HEK293 (cell line): ENCODE measurements at regions of chr9 and their contacts with region 1.

Region 1: GRCh38 chr9:73023025-73023541 is 70.2 kb upstream of the ALDH1A1 start:
- H3K4me3 ChIP-seq: no peak overlapping the region
- H3K27ac ChIP-seq: no peak overlapping the region
- H3K4me1 ChIP-seq: no peaks in the 10 kb centered on the region
- CTCF ChIP-seq: 0 out of 2 replicates have a peak, but pooled peaks have one; percentile 18

Region 2: GRCh38 chr9:72843520-72844439 is 179.3 kb before region 1 on chr9:
- CTCF ChIA-PET with region 1: interaction called, 17 read pairs
- POLR2A ChIA-PET with region 1: no interaction called
- H3K4me3 ChIP-seq: no peak overlapping the region
- H3K27ac ChIP-seq: no peak overlapping the region
- H3K4me1 ChIP-seq: no peaks in the 10 kb centered on the region
- CTCF ChIP-seq: no peak

Region 3: DNA sequence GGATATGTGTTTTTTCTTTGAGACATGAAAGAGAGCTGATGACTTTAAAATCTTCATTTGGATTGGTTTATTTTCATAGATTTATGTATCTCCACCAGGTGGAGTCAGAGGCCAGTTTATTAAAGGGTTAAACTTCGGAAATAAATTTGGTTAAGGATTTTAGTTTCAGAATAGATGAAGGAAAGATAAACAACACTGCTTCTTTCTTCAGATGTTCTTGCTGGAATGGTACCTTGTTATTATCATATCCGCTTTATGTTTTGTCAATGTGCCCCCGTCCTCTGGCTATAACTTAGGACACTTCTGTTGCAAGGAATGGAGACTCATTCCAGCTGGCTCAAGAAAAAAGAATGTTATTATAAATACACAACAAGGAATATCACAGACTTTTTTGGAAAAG is 151.4 kb before region 1 on chr9:
- CTCF ChIA-PET with region 1: interaction called, 38 read pairs
- POLR2A ChIA-PET with region 1: no interaction called
- H3K4me3 ChIP-seq: no peak overlapping the region
- H3K27ac ChIP-seq: no peak overlapping the region
- H3K4me1 ChIP-seq: no peaks in the 10 kb centered on the region
- CTCF ChIP-seq: no peak

Region 4: DNA sequence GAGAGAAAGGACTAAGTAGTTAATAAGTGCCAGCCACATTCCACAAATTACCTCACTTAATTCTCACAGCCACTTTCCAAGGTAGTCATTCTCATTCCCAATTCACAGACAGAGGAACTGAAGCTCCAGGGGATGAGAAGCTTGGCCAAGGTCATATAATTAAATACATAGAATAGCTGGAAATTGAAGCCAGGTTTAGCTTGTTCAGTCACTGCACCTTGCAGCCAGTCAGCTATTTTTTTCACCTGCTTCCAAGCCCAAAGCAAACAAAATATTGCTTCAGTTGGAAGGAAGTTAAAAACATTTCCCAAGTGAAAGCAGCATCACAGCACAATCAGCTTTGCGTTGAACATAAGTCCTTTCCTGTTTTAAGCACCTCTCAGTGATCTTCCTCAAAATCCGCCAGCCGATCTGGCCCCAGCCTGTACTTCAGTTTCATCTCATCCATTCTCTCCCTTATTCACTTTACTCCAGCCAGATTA is 75.1 kb before region 1 on chr9:
- CTCF ChIA-PET with region 1: no interaction called
- POLR2A ChIA-PET with region 1: no interaction called
- H3K4me3 ChIP-seq: no peak overlapping the region
- H3K27ac ChIP-seq: no peak overlapping the region
- H3K4me1 ChIP-seq: no peaks in the 10 kb centered on the region
- CTCF ChIP-seq: no peak

Region 5: DNA sequence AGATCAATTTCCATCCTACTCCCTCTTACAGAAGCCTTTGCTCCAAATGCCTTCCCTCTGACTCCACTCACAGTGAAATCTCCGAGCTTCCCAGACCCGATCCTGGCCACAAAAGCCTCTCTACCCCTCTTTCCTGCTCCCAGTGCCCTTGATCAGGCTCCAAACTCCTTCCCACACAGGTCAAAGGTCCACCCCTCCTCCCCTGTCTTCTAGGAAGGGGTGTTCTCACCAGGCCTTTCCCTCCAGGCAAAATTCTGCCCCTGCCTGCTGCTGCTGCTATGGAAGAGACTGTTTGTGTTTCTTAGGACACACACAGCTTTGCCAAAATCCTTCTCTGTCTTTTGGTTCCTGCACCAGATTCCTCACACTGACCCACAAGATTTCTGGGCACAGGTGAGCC is 15.5 kb after region 1 on chr9:
- CTCF ChIA-PET with region 1: interaction called, 39 read pairs
- POLR2A ChIA-PET with region 1: interaction called, 4 read pairs
- H3K4me3 ChIP-seq: no peak overlapping the region
- H3K27ac ChIP-seq: no peak overlapping the region
- H3K4me1 ChIP-seq: 0 out of 2 replicates have a peak, but pooled peaks cover 2% of the 10 kb centered on the region
- CTCF ChIP-seq: no peak

Region 6: GRCh38 chr9:73810585-73811215 is 787.6 kb after region 1 on chr9:
- CTCF ChIA-PET with region 1: no interaction called
- POLR2A ChIA-PET with region 1: no interaction called
- H3K4me3 ChIP-seq: no peak overlapping the region
- H3K27ac ChIP-seq: no peak overlapping the region
- H3K4me1 ChIP-seq: no peaks in the 10 kb centered on the region
- CTCF ChIP-seq: no peak